Left ventricle myocardium inferior (tissue), 1 donor: ENCODE measurements at regions of chr7 and their contacts with region 1.

Region 1: DNA sequence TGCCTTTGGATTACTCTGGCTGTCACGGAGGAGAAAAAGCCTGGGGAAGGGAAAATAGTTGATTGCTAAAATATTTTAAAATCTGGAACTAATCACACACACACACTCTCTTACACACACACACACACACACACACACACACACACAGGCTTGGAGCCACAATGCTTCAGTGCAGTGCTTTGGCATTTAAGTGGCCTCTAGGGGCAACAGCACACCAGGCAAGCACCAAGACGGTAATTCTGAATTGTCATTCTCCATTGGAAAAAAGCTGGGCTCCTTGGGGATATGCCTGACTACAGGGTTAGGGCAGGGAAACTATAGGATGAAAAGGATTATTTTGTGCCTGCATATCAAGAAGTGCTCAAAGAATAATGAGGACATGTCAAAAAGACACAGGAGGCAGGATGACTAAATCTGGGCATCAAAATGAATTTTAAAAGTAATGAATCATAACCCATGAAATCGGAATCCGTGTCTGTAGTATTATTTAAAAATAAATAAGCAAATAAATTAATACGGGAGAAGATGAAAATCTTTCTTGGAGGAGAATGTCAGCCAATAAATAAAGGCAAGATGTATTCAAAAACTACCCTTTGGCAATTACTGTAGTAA is 30.4 kb upstream of the DDC start:
- DNase-seq: no peak
- H3K4me3 ChIP-seq: no peak overlapping the region
- H3K27ac ChIP-seq: no peak overlapping the region
- H3K4me1 ChIP-seq: no peaks in the 10 kb centered on the region
- H3K27me3 ChIP-seq: no peaks in the 10 kb centered on the region
- CTCF ChIP-seq: peak; percentile 40

Region 2: GRCh38 chr7:50467817-50468610 is 127.6 kb before region 1 on chr7:
- intact Hi-C with region 1: loop called (anchors 10 kb)
- DNase-seq: peak; percentile 81
- H3K4me3 ChIP-seq: no peak overlapping the region
- H3K27ac ChIP-seq: no peak overlapping the region
- H3K4me1 ChIP-seq: peaks cover 6% of the 10 kb centered on the region
- H3K27me3 ChIP-seq: peaks cover 6% of the 10 kb centered on the region
- CTCF ChIP-seq: peak; percentile 95